ENCODE measurements at regions of chr7 and their contacts with region 1.

Region 1: GRCh38 chr7:135274495-135275268 is 41.0 kb downstream of the STRA8 start:
- DNase-seq: peak; percentile 73
- ATAC-seq: peak; percentile 94
- H3K4me3 ChIP-seq: no peak overlapping the region
- H3K27ac ChIP-seq: no peak overlapping the region
- H3K4me1 ChIP-seq: no peaks in the 10 kb centered on the region
- H3K27me3 ChIP-seq: no peaks in the 10 kb centered on the region
- CTCF ChIP-seq: peak; percentile 71 to 87 (median 78); a peak in 5 of 6 replicates
- POLR2A ChIP-seq: no peak
- RAD21 ChIP-seq: peak; percentile 86

Region 2: GRCh38 chr7:135262623-135263315 is 11.9 kb before region 1 on chr7:
- CTCF ChIA-PET with region 1: interaction called, 10 read pairs
- POLR2A ChIA-PET with region 1: no interaction called
- RAD21 ChIA-PET with region 1: no interaction called
- intact Hi-C with region 1: no loop called
- DNase-seq: no peak
- ATAC-seq: no peak
- H3K4me3 ChIP-seq: no peak overlapping the region
- H3K27ac ChIP-seq: no peak overlapping the region
- H3K4me1 ChIP-seq: no peaks in the 10 kb centered on the region
- H3K27me3 ChIP-seq: no peaks in the 10 kb centered on the region; the same call in 1 of the 2 replicates
- CTCF ChIP-seq: no peak
- POLR2A ChIP-seq: no peak
- RAD21 ChIP-seq: no peak

Region 3: GRCh38 chr7:135335628-135336139 is 61.0 kb after region 1 on chr7:
- CTCF ChIA-PET with region 1: interaction called, 77 read pairs
- POLR2A ChIA-PET with region 1: no interaction called
- RAD21 ChIA-PET with region 1: interaction called, 4 to 7 read pairs
- intact Hi-C with region 1: loop called (anchors 2 kb)
- DNase-seq: peak; percentile 66
- ATAC-seq: peak; percentile 99
- H3K4me3 ChIP-seq: no peak overlapping the region
- H3K27ac ChIP-seq: no peak overlapping the region
- H3K4me1 ChIP-seq: no peaks in the 10 kb centered on the region
- H3K27me3 ChIP-seq: no peaks in the 10 kb centered on the region
- CTCF ChIP-seq: peak; percentile 65 to 96 (median 71)
- POLR2A ChIP-seq: no peak
- RAD21 ChIP-seq: peak; percentile 91

Region 4: DNA sequence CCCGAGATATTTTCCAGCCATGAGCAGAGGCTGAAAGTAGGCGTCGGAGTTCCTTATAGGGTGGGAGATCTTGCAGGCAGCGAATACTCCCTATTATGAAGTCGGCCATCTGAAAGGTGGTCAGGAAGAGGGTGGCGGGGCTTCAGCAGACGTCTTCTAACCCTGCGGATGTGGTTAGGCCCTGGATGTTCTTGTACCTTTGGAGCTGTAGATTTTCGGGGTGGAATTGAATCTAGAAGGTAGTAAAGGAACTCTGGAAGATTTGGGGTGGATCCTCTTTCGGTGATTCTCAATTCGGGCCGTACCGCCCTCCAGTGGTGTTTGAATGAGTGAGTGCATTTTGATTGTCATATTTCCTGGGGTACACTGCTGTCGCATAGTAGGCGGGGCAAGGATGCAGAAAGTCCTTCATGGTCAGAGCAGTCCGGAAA is 283.7 kb after region 1 on chr7:
- CTCF ChIA-PET with region 1: no interaction called
- POLR2A ChIA-PET with region 1: no interaction called
- RAD21 ChIA-PET with region 1: no interaction called
- intact Hi-C with region 1: loop called (anchors 5 kb)
- DNase-seq: peak; percentile 45
- ATAC-seq: peak; percentile 79
- H3K4me3 ChIP-seq: peak overlapping the region; percentile 87 to 89
- H3K27ac ChIP-seq: peak overlapping the region; percentile 89
- H3K4me1 ChIP-seq: peaks cover 4 to 13% of the 10 kb centered on the region in 2 experiments; a peak in 3 of 4 replicates
- H3K27me3 ChIP-seq: no peaks in the 10 kb centered on the region
- CTCF ChIP-seq: peak; percentile 57 to 69 (median 64); a peak in 5 of 6 replicates
- POLR2A ChIP-seq: no peak
- RAD21 ChIP-seq: peak; percentile 62

Region 5: DNA sequence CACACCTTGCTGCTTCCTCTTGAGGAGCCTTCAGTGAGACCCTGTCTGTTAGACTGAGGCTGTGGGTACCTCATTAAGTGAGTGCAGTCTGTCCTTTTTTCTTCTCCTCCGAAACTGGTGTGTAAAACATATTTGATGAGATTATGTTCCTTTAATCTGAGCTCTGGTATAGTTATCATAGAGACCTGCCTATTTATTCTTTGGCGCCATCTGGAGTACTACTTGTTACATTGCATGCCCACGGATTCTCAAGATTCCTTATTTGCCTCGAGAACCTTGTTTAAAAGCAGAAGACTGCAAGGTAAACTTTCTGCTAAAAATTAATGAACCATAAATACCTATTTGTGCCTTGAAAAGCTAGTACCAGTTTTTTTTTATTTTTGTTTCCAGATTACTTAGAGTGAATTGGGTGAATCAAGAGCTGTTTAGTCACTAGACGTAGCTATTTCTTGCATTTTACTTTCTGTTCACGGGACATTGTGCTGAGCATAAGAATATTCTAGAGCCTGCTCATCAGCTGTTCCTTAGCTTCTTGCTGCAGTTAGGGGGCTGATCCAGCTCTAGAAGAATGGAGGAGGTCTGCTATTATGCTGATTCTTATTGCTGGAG is 370.7 kb after region 1 on chr7:
- CTCF ChIA-PET with region 1: interaction called, 11 read pairs
- POLR2A ChIA-PET with region 1: interaction called, 3 read pairs
- RAD21 ChIA-PET with region 1: interaction called in 1 of 2 experiments, 3 read pairs
- intact Hi-C with region 1: loop called (anchors 1 kb)
- DNase-seq: peak; percentile 40
- ATAC-seq: peak; percentile 87
- H3K4me3 ChIP-seq: no peak overlapping the region
- H3K27ac ChIP-seq: no peak overlapping the region
- H3K4me1 ChIP-seq: no peaks in the 10 kb centered on the region
- H3K27me3 ChIP-seq: no peaks in the 10 kb centered on the region
- CTCF ChIP-seq: peak; percentile 52 to 76 (median 68); a peak in 5 of 6 replicates
- POLR2A ChIP-seq: no peak
- RAD21 ChIP-seq: peak; percentile 65

Region 6: DNA sequence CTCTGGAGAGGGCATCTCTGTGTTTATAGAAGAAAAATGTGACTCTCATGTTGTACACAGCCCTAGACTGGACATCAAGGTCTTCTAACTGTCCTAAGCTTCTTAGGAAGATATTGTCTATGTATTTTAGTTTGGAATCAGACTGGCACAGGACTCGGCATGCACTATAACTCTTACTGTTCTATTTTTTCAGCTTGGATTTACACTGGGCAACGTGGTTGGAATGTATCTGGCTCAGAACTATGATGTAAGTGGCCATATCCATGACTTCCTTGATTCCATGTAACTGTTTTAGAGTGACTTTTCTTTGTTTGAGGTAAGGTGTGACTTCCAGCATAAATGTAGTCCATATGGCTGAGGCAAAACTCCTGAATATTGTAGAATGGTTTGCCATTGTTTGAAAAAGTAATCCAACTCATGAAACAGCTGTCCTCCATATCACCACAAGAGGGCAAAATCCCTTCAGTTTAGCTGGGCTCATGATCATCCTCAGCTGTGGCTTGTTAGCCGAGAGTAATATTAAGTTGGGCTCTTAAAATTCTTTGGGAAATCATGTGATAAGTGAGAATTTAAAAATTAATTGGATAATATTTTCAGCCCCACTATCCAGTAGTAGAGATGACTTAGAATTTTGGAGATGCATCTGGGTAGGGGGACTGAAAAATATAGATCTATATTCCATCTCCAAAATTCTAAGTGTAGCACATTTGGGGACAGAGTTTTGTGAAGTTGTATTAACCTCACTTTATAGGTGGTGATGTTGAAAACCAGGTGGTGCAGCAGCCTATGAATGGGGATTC is 398.1 kb after region 1 on chr7:
- CTCF ChIA-PET with region 1: interaction called, 14 read pairs
- POLR2A ChIA-PET with region 1: no interaction called
- RAD21 ChIA-PET with region 1: no interaction called
- intact Hi-C with region 1: no loop called
- DNase-seq: peak; percentile 37
- ATAC-seq: peak; percentile 88
- H3K4me3 ChIP-seq: no peak overlapping the region
- H3K27ac ChIP-seq: no peak overlapping the region
- H3K4me1 ChIP-seq: no peaks in the 10 kb centered on the region
- H3K27me3 ChIP-seq: no peaks in the 10 kb centered on the region
- CTCF ChIP-seq: peak; percentile 66 to 85 (median 78); a peak in 5 of 6 replicates
- POLR2A ChIP-seq: no peak
- RAD21 ChIP-seq: peak; percentile 83

Region 7: DNA sequence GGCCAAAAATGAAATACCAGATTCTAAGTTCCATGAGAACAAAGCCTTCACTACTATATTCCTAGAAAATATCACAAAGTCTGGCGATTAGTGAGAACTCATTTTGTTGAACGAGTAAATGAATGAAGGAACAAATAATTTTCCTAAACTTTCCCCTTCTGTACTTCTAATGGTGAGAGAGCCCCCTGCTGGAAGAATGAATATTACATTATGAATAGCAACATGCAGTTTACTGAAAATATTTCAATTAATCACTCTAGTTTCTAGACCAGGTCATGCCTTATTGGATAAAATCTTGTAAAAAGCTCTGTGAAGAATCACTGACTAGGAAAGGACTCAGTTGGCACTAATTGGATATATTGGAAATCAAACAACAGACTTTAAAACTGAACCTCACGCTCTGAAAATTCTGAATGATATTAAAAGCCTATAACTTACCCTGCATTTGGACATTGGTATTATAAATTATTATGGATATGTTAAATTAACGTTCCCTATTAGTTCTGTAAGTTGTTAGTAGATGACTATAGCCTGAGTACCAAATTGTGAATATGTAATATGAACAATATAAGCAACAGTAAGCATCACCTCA is 734.9 kb after region 1 on chr7:
- CTCF ChIA-PET with region 1: interaction called, 3 read pairs
- POLR2A ChIA-PET with region 1: no interaction called
- RAD21 ChIA-PET with region 1: no interaction called
- intact Hi-C with region 1: loop called (anchors 5 kb)
- DNase-seq: peak; percentile 22
- ATAC-seq: 0 out of 2 replicates have a peak, but pooled peaks have one; percentile 55
- H3K4me3 ChIP-seq: no peak overlapping the region
- H3K27ac ChIP-seq: no peak overlapping the region
- H3K4me1 ChIP-seq: no peaks in the 10 kb centered on the region
- H3K27me3 ChIP-seq: peaks cover 16% of the 10 kb centered on the region
- CTCF ChIP-seq: peak; percentile 56 to 83 (median 75)
- POLR2A ChIP-seq: no peak
- RAD21 ChIP-seq: peak; percentile 88